ENCODE measurements at regions of chr13 and their contacts with region 1.

Region 1: DNA sequence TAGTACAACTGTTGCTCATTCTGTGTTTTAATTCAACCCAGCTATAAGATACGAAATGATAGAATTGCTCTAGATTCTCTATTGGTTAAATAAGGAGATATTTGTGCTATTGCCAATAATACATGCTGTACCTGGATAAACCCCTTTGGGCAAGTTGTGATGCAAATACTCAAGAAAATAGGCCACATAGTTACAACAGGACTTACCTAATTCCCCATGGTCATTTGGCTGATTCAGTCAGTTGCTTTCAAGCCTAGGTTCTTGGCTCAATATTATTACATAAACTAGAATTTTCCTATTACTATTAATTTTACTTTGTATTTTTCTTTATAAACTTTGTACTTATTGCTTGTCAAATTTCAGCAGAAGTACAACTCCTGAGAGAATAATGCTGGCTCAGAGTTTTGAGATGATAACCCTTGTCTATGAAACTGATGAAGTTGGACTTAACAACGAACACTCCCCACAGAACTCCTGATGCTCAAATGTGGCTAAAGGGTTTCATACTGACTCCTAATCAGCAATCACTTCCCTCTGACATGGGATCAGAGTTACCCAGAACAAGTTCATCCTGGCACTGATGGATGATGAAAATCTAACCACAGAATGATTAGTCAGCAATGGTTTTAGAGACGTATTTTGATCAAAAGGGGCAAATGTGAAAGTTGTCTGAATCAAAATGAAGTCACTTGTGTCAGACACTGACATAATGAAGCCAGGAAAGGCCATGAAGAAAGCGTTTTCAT is 221.1 kb downstream of the ITGBL1 start:
- DNase-seq: no peak
- ATAC-seq: peak; percentile 53

Region 2: GRCh38 chr13:100473087-100473486 is 1200.4 kb before region 1 on chr13:
- intact Hi-C with region 1: loop called (anchors 5 kb)
- DNase-seq: no peak
- ATAC-seq: no peak

Region 3: GRCh38 chr13:102620516-102620915 is 947.0 kb after region 1 on chr13:
- intact Hi-C with region 1: no loop called
- DNase-seq: no peak
- ATAC-seq: no peak

Measured in sciatic nerve (tissue), 2 donors.